AG04449 (cell line): ENCODE measurements at regions of chr5 and their contacts with region 1.

Region 1: DNA sequence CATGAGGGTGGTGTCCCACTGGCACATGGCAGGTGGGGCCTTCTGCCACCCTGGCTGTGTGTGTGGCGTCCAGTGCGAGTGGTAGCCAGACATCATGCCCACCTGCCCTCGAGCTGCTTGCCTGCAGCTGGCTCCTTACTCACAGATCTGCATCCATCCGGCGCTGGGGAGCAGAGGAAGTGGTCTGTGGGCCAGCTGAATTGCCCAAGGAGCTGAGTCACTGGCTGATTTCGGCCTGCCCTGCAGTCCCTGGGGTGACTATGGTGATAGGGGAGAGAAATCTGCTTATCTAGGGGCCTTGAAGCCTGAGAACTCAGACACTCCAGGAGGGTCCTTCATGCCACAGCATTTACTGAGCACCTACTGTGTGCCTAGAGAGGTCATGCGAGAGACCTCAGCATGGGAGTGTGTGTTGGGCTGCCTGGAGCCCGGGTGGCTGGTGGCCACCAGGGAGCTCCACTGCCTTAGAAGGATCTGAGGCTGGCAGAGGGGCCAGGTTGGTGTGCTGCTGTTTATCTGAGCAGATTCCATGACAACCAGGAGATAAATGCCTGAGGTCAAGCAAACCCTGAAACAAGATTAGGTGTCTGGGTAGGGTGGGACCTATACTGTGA is 57.1 kb downstream of the SLC22A5 start:
- DNase-seq: peak; percentile 76
- H3K4me3 ChIP-seq: no peak overlapping the region; the same call in 1 of the 2 replicates
- CTCF ChIP-seq: peak; percentile 56

Region 2: GRCh38 chr5:132410451-132411381 is 15.9 kb before region 1 on chr5:
- CTCF ChIA-PET with region 1: interaction called, 43 read pairs
- POLR2A ChIA-PET with region 1: no interaction called
- DNase-seq: no peak
- H3K4me3 ChIP-seq: peak overlapping the region; percentile 69
- CTCF ChIP-seq: peak; percentile 65

Region 3: GRCh38 chr5:132437604-132438266 is 11.1 kb after region 1 on chr5:
- CTCF ChIA-PET with region 1: interaction called, 12 read pairs
- POLR2A ChIA-PET with region 1: interaction called, 5 read pairs
- DNase-seq: peak; percentile 85
- H3K4me3 ChIP-seq: no peak overlapping the region
- CTCF ChIP-seq: no peak

Region 4: GRCh38 chr5:132456296-132457001 is 29.8 kb after region 1 on chr5:
- CTCF ChIA-PET with region 1: interaction called, 27 read pairs
- POLR2A ChIA-PET with region 1: interaction called, 10 read pairs
- DNase-seq: no peak
- H3K4me3 ChIP-seq: no peak overlapping the region
- CTCF ChIP-seq: no peak

Region 5: GRCh38 chr5:132466433-132467286 is 40.0 kb after region 1 on chr5:
- CTCF ChIA-PET with region 1: interaction called, 16 read pairs
- POLR2A ChIA-PET with region 1: no interaction called
- DNase-seq: no peak
- H3K4me3 ChIP-seq: no peak overlapping the region
- CTCF ChIP-seq: no peak

Region 6: DNA sequence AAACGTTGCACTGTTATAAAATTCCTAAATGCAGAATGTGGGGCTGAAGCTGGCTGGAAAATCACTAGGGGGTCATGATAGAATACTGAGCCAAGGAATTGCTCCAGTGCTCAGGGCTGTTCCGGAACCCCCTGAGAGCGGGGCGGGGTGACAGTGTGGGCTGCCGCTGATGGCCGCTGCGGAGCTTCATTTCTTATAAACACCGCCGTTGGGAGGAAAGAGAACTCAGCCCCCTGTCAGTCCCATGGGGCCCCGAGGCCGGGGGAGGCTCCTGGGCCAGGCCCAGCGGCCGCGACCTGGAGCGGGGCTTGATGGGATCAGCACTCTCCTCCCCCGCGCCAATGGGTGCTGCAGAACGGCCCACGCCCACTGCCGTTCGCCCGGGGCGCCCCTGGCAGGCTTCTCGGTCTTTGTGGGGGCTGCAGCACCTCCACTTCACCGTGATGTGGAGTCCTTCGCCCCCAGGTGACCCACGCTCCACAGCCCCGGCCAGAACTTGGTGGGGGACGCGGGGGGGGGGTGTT is 69.1 kb after region 1 on chr5:
- CTCF ChIA-PET with region 1: interaction called, 109 read pairs
- POLR2A ChIA-PET with region 1: interaction called, 26 read pairs
- DNase-seq: no peak
- H3K4me3 ChIP-seq: peak overlapping the region; percentile 69
- CTCF ChIP-seq: peak; percentile 4